ENCODE measurements at regions of chr12 and their contacts with region 1.

Region 1: GRCh38 chr12:11085419-11085818 is 6.7 kb downstream of the TAS2R43 start:
- DNase-seq: no peak
- H3K4me3 Mint-ChIP-seq: no peak overlapping the region
- H3K27ac Mint-ChIP-seq: no peak overlapping the region
- H3K4me1 Mint-ChIP-seq: peaks cover 7% of the 10 kb centered on the region
- H3K27me3 Mint-ChIP-seq: no peaks in the 10 kb centered on the region

Region 2: DNA sequence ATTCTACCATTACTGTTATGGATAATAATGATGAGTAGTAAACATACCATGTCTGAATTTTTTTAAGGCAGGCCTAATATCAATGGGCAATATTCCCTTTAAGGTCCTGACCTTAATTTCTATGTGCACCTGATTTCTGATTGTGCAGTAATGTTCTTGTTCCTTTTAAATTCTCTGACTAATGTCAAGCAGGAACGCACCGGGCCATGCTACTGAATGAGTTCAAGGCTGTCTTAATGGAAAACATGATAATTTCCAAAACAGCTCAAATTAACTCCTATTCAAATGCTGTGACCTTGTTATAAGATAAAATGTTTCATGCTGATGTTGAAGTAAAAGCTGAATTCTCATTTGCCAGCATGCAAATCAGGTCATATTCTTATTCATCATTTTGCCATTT is 30.1 kb before region 1 on chr12:
- CTCF ChIA-PET with region 1: no interaction called
- POLR2A ChIA-PET with region 1: no interaction called
- intact Hi-C with region 1: loop called (anchors 1 kb)
- DNase-seq: no peak
- H3K4me3 Mint-ChIP-seq: no peak overlapping the region
- H3K27ac Mint-ChIP-seq: no peak overlapping the region
- H3K4me1 Mint-ChIP-seq: peaks cover 3% of the 10 kb centered on the region
- H3K27me3 Mint-ChIP-seq: no peaks in the 10 kb centered on the region

Measured in activated CD4-positive, alpha-beta memory T cell treated with anti-CD3 and anti-CD28 coated beads for 36 hours (primary cell).